ENCODE measurements at regions of chr5 and their contacts with region 1.

Region 1: GRCh38 chr5:177497292-177498033 is at the start of gene PDLIM7:
- DNase-seq: peak; percentile 97
- ATAC-seq: peak; percentile 82
- H3K4me3 Mint-ChIP-seq: peak within 1 kb of the TSS; percentile 79
- H3K27ac Mint-ChIP-seq: peak within 1 kb of the TSS; percentile 68
- H3K4me1 Mint-ChIP-seq: peaks cover 38% of the 10 kb centered on the region
- H3K27me3 Mint-ChIP-seq: peaks cover 11% of the 10 kb centered on the region
- CTCF ChIP-seq: no peak
- total RNA-seq, gene PDLIM7: 68.4 to 73.0 TPM

Region 2: GRCh38 chr5:177473461-177474001 is 23.9 kb before region 1 on chr5 and contains the start of gene DBN1:
- CTCF ChIA-PET with region 1: interaction called, 37 read pairs
- POLR2A ChIA-PET with region 1: interaction called, 130 read pairs
- intact Hi-C with region 1: no loop called
- DNase-seq: peak; percentile 54
- ATAC-seq: peak; percentile 35
- H3K4me3 Mint-ChIP-seq: peak within 1 kb of the TSS; percentile 80
- H3K27ac Mint-ChIP-seq: peak within 1 kb of the TSS; percentile 82
- H3K4me1 Mint-ChIP-seq: peaks cover 60% of the 10 kb centered on the region
- H3K27me3 Mint-ChIP-seq: no peaks in the 10 kb centered on the region
- CTCF ChIP-seq: no peak
- total RNA-seq, gene DBN1: 101 to 105 TPM

Region 3: GRCh38 chr5:177478711-177479646 is 18.5 kb before region 1 on chr5:
- CTCF ChIA-PET with region 1: interaction called, 37 read pairs
- POLR2A ChIA-PET with region 1: interaction called, 130 read pairs
- intact Hi-C with region 1: no loop called
- DNase-seq: peak; percentile 80
- ATAC-seq: peak; percentile 76
- H3K4me3 Mint-ChIP-seq: peak overlapping the region; percentile 32
- H3K27ac Mint-ChIP-seq: peak overlapping the region; percentile 98
- H3K4me1 Mint-ChIP-seq: peaks cover 52% of the 10 kb centered on the region
- H3K27me3 Mint-ChIP-seq: no peaks in the 10 kb centered on the region
- CTCF ChIP-seq: no peak

Region 4: DNA sequence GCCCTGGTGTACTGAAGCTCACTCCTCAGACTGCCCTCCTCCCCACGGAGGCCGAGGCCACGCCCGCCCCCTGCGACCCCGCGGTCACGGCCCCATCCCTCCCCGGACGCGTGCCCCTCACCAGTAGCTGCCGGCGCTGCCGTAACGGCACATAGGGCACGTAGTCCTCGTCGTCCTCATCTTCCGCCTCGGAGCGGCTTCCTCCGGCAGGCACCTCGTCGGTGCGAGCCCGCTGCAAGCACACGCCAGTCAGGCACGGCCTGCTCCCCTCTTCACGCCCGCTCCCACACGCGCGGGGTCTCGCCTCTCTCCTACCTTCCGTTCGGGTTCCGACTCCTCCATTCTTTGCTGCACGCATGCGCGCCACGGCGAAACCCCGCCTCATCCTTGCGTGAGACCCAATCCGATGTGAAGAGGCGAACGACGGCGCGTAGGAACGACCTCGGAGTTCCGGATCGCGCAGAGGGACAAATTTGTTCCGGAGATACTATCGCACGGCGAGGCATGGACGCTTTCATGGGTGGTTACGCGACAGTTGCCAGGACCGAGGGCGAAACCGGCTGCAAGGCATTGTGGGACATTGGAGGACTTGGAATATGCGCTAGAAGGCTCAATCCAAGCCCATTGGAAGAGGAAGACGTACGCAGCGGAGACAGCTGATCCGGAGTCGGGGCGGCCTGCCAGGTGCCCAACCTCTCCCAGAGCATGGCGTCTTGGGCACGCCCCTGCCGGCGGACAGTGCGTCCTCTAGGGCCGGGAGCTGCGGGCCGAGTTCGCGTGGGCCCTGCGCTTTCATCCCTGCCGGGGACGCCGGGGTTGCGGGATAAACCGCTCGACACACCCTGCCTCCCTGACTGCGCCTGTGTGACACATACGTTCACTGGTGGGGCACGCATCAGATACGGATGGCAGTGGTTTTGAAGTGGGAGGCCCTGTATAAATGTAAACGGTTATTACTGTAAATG is 19.4 kb after region 1 on chr5 and contains the start of gene DDX41:
- CTCF ChIA-PET with region 1: interaction called, 65 read pairs
- POLR2A ChIA-PET with region 1: interaction called, 9 read pairs
- intact Hi-C with region 1: no loop called
- DNase-seq: peak; percentile 97
- ATAC-seq: peak; percentile 90
- H3K4me3 Mint-ChIP-seq: peak within 1 kb of the TSS; percentile 92
- H3K27ac Mint-ChIP-seq: peak within 1 kb of the TSS; percentile 91
- H3K4me1 Mint-ChIP-seq: peaks cover 49% of the 10 kb centered on the region
- H3K27me3 Mint-ChIP-seq: no peaks in the 10 kb centered on the region
- CTCF ChIP-seq: no peak
- total RNA-seq, gene DDX41: 226 to 228 TPM

Measured in activated CD8-positive, alpha-beta T cell treated with anti-CD3 and anti-CD28 coated beads for 36 hours (primary cell).